Naive thymus-derived CD4-positive, alpha-beta T cell (primary cell): ENCODE measurements at regions of chr4 and their contacts with region 1.

Region 1: GRCh38 chr4:742742-743311 is 37.2 kb downstream of the PCGF3 start:
- DNase-seq: peak; percentile 47 to 80 (median 69)
- ATAC-seq: peak; percentile 93
- H3K4me3 ChIP-seq: no peak overlapping the region
- H3K4me3 Mint-ChIP-seq: no peak overlapping the region
- H3K27ac ChIP-seq: no peak overlapping the region
- H3K27ac Mint-ChIP-seq: peak overlapping the region in 1 of 9 donors; percentile 41
- H3K4me1 ChIP-seq: no peaks in the 10 kb centered on the region
- H3K4me1 Mint-ChIP-seq: peaks cover 0 to 6% (median 2%) of the 10 kb centered on the region in 7 donors
- H3K27me3 ChIP-seq: no peaks in the 10 kb centered on the region
- H3K27me3 Mint-ChIP-seq: no peaks in the 10 kb centered on the region

Region 2: DNA sequence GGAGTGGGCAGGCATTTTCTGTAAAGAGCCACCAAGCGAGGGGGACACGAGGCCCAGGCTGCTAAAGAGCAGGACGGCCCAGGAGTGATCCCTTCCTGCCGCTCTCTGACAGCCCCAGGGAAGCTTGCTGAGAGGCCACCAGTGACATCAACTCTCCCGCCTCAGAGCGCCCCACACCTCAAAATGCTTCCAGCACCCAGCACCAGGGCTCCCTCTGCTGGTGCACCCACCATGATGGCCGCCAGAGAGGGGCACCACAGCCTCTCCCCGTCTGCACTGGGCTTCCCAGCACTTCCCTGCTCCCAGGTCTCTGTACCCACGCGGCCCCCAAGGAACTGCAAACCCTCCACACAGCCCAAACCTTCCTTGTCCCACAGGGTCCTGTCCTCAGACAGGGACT is 148.9 kb after region 1 on chr4:
- CTCF ChIA-PET with region 1: interaction called, 3 read pairs
- POLR2A ChIA-PET with region 1: no interaction called
- intact Hi-C with region 1: loop called in 1 of 2 experiments (anchors 5 kb)
- DNase-seq: no peak
- ATAC-seq: no peak
- H3K4me3 ChIP-seq: no peak overlapping the region
- H3K4me3 Mint-ChIP-seq: peak overlapping the region in 1 of 10 donors; percentile 51
- H3K27ac ChIP-seq: no peak overlapping the region
- H3K27ac Mint-ChIP-seq: peak overlapping the region in 1 of 9 donors; percentile 25
- H3K4me1 ChIP-seq: no peaks in the 10 kb centered on the region
- H3K4me1 Mint-ChIP-seq: peaks cover 0 to 3% (median 0%) of the 10 kb centered on the region in 7 donors
- H3K27me3 ChIP-seq: no peaks in the 10 kb centered on the region
- H3K27me3 Mint-ChIP-seq: no peaks in the 10 kb centered on the region

Region 3: DNA sequence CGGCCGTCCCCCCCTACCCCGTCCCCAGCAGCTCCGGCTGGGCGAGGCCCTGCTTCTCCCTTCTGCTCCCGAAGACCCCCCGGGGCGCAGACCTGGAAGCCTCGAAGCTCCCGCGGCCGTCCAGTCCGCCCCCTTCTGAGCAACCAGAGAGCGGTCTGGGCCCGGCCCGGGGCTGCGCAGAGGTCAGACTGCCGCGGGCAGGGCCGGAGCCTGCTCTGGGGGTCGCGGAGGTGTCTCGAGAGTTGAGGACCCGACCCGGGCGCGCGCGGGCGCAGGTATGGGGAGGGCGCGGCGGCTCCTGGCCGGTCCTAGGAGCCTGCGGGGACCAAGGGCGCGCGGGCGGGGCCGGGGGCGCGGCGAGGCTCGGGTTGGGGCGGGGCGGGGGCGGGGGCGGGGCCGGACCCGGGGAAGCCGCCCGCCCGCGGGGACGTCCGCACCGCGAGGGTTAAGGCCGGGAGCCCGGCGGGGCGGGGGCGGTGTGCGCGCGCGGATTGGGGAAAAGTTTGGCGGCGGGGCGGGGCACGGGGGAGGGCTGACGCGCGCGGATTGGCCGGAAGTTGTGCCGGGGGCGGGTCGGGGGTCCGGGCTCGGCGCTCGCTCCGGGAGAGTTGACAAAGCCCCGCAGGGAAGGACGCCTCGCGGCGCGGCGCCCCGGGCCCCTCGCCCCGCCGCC is 268.3 kb after region 1 on chr4 and contains the start of gene FGFRL1:
- CTCF ChIA-PET with region 1: no interaction called
- POLR2A ChIA-PET with region 1: no interaction called
- intact Hi-C with region 1: loop called in 1 of 2 experiments (anchors 2 kb)
- DNase-seq: peak; percentile 78 to 95 (median 87)
- ATAC-seq: peak; percentile 78
- H3K4me3 ChIP-seq: peak within 1 kb of the TSS; percentile 77
- H3K4me3 Mint-ChIP-seq: peak within 1 kb of the TSS; percentile 86 to 97 (median 89)
- H3K27ac ChIP-seq: peak within 1 kb of the TSS; percentile 83
- H3K27ac Mint-ChIP-seq: peak within 1 kb of the TSS; percentile 76 to 96 (median 92)
- H3K4me1 ChIP-seq: peaks cover 0 to 10% of the 10 kb centered on the region in 2 donors
- H3K4me1 Mint-ChIP-seq: peaks cover 15 to 21% (median 18%) of the 10 kb centered on the region in 7 donors
- H3K27me3 ChIP-seq: no peaks in the 10 kb centered on the region
- H3K27me3 Mint-ChIP-seq: peaks cover 24 to 31% (median 27%) of the 10 kb centered on the region in 5 donors
- total RNA-seq, gene FGFRL1: 10.6 to 28.1 (median 22.0) TPM

Region 4: GRCh38 chr4:1072830-1073446 is 330.1 kb after region 1 on chr4:
- CTCF ChIA-PET with region 1: no interaction called
- POLR2A ChIA-PET with region 1: no interaction called
- intact Hi-C with region 1: loop called in 1 of 2 experiments (anchors 2 kb)
- DNase-seq: peak in 8 of 9 donors; percentile 38 to 66 (median 54)
- ATAC-seq: peak; percentile 90
- H3K4me3 ChIP-seq: no peak overlapping the region
- H3K4me3 Mint-ChIP-seq: peak overlapping the region in 2 of 10 donors; percentile 0 to 9
- H3K27ac ChIP-seq: no peak overlapping the region
- H3K27ac Mint-ChIP-seq: peak overlapping the region in 6 of 9 donors; percentile 1 to 38 (median 18)
- H3K4me1 ChIP-seq: peaks cover 0 to 7% of the 10 kb centered on the region in 2 donors
- H3K4me1 Mint-ChIP-seq: peaks cover 7 to 15% (median 14%) of the 10 kb centered on the region in 7 donors
- H3K27me3 ChIP-seq: no peaks in the 10 kb centered on the region
- H3K27me3 Mint-ChIP-seq: peaks cover 8 to 29% (median 13%) of the 10 kb centered on the region in 5 donors